Heart right ventricle (tissue), 16 donors: ENCODE measurements at regions of chr1 and their contacts with region 1.

Region 1: DNA sequence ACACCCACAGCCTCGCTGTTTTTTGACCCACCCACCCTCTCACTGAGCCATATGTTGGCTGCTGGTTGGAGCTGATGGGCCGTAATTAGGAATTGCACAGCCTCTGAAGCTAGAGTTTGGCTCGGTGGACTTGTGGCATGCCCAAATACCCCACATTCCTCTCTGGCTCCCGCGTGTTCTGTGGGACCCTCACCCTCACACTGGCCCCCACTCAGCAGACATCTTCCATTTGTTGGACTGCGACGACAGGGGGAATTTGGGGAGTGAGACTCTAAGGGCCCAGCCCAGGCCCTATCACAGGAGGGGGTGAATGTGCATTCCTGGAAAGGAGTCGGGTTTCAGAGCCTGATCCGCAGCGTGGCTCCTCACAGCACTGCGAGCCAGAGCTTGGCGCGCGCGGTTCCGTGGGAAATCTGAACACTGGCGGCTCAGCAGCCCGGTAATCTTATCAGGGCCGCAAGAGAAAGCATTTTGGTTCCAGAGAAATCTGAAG is 5.2 kb downstream of the RCSD1 start:
- DNase-seq: peak; percentile 71 to 73
- ATAC-seq: peak; percentile 59 to 82 (median 71)
- H3K4me3 ChIP-seq: peak overlapping the region in 6 of 10 donors; percentile 11 to 26 (median 21)
- H3K27ac ChIP-seq: peak overlapping the region; percentile 41 to 98 (median 76)
- H3K4me1 ChIP-seq: peaks cover 17 to 88% (median 72%) of the 10 kb centered on the region in 9 donors
- H3K27me3 ChIP-seq: no peaks in the 10 kb centered on the region
- CTCF ChIP-seq: no peak

Region 2: DNA sequence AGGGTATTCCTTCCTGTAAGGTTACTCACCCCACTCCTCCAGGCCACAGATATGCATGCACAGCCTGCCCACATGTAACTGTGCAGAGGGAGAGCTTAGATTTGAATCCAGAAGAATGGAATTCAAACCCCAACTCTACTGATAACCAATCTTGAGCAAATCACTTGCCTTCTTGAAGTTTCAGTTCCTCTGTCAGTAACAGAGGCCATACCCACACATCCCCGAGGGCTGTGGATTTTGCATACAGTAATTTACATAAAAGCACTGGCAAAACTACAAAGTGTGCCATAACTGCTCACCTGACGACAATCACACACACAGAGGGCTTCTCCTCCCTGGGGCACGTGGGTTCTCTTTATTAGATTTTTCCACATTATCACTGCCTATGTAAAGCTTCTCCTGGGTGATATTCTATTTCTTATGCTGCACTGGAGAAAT is 135.5 kb before region 1 on chr1:
- intact Hi-C with region 1: no loop called
- DNase-seq: no peak
- ATAC-seq: no peak
- H3K4me3 ChIP-seq: no peak overlapping the region
- H3K27ac ChIP-seq: no peak overlapping the region
- H3K4me1 ChIP-seq: no peaks in the 10 kb centered on the region
- H3K27me3 ChIP-seq: peaks cover 0 to 40% (median 15%) of the 10 kb centered on the region in 7 donors
- CTCF ChIP-seq: no peak

Region 3: DNA sequence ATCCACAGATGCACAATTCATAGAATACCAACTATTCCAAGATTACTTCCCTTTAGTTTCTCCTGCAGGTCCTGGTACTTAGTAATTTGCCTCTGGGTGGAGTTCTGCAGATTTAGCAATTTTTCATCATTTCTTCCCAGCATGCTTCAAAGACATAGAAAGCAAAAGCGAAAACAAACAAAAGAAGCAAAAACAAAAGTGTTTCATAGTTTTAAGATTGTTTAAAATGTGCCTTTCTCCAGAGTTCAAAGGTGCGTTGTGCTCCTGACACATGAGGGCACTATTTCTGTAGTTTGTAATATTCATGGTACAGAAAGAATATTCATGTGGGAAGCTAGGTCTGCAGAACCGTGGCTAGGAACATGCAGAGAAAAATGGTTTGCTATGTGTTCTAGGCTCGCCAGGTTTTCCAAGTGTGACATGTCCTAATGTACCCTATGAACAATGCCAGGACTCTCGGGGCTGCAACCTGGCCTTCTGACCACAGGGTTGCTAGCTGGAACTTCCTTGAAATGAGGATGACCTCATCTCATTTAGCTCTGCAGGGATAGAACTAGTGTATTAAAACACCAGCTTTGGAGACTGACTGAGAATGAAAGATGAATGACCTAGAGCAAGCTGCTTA is 35.1 kb before region 1 on chr1:
- intact Hi-C with region 1: loop called in 2 of 10 experiments (anchors 2 to 5 kb)
- DNase-seq: peak in 1 of 2 donors; percentile 51
- ATAC-seq: peak; percentile 73 to 89 (median 82)
- H3K4me3 ChIP-seq: peak overlapping the region in 1 of 10 donors; percentile 15
- H3K27ac ChIP-seq: peak overlapping the region in 7 of 10 donors; percentile 35 to 91 (median 58)
- H3K4me1 ChIP-seq: peaks cover 5 to 45% (median 33%) of the 10 kb centered on the region in 9 donors
- H3K27me3 ChIP-seq: no peaks in the 10 kb centered on the region
- CTCF ChIP-seq: peak; percentile 47 to 86 (median 72)